Activated T-helper 1 cell treated with anti-CD3 and anti-CD28 coated beads, Interleukin-12 subunit alpha, Interleukin-12 subunit beta, Interleukin-2, Interleukin-4 antibody, amounts not matched to agents 30 ng/mL and 10 ng/mL and 1 ng/mL, durations not matched to agents 14 hours and 24 hours and 36 hours (primary cell): ENCODE measurements at regions of chr12 and their contacts with region 1.

Region 1: GRCh38 chr12:14239350-14239934 is 126.0 kb upstream of the ATF7IP start:
- DNase-seq: no peak
- H3K4me3 Mint-ChIP-seq: peak overlapping the region; percentile 74
- H3K27ac Mint-ChIP-seq: peak overlapping the region; percentile 73
- H3K4me1 Mint-ChIP-seq: peaks cover 22% of the 10 kb centered on the region
- H3K27me3 Mint-ChIP-seq: no peaks in the 10 kb centered on the region

Region 2: DNA sequence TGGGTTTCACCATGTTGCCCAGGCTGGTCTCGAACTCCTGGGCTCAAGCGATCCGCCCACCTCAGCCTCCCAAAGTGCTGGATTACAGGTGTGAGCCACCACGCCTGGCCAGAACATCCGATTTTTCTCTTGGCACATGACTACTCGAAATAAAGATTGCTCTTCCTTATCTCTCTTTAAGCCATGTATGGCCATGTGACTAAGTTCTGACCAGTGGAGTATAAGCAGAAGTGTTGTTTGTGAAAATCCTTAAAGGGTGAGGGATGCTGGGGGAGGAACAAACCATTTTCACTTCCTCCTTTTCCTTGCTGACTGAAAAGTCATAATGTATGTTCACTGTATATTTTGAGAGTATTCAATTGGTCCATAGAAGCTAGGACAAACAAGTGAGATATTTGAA is 75.4 kb after region 1 on chr12:
- intact Hi-C with region 1: no loop called
- DNase-seq: no peak
- H3K4me3 Mint-ChIP-seq: no peak overlapping the region
- H3K27ac Mint-ChIP-seq: no peak overlapping the region
- H3K4me1 Mint-ChIP-seq: no peaks in the 10 kb centered on the region
- H3K27me3 Mint-ChIP-seq: no peaks in the 10 kb centered on the region

Region 3: DNA sequence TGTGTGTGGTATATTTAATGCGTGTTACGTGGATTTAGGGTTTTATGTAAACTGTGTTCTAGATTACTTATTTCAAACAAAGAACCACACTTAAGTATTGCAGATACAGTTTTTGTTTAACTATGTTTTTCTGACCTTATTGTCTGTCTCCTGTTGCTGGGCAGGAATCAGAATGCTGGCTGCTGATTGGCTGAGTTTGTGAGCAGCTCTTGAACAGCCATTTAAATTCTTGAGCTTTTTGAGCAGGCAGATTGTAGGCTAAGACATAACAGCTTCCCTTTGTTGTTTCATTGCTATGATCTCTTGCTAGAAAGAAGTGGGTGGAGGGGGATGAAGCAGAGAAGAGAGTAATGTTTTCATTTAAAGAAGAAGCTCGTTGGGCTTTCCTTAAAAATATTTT is 178.3 kb after region 1 on chr12:
- intact Hi-C with region 1: loop called (anchors 1 kb)
- DNase-seq: peak; percentile 60
- H3K4me3 Mint-ChIP-seq: peak overlapping the region; percentile 75
- H3K27ac Mint-ChIP-seq: peak overlapping the region; percentile 88
- H3K4me1 Mint-ChIP-seq: peaks cover 56% of the 10 kb centered on the region
- H3K27me3 Mint-ChIP-seq: no peaks in the 10 kb centered on the region

Region 4: GRCh38 chr12:14454098-14454907 is 214.9 kb after region 1 on chr12:
- intact Hi-C with region 1: loop called (anchors 1 kb)
- DNase-seq: peak; percentile 34
- H3K4me3 Mint-ChIP-seq: peak overlapping the region; percentile 46
- H3K27ac Mint-ChIP-seq: peak overlapping the region; percentile 84
- H3K4me1 Mint-ChIP-seq: peaks cover 54% of the 10 kb centered on the region
- H3K27me3 Mint-ChIP-seq: no peaks in the 10 kb centered on the region

Region 5: GRCh38 chr12:14618983-14619382 is 379.5 kb after region 1 on chr12:
- intact Hi-C with region 1: loop called (anchors 1 kb)
- DNase-seq: no peak
- H3K4me3 Mint-ChIP-seq: no peak overlapping the region
- H3K27ac Mint-ChIP-seq: no peak overlapping the region
- H3K4me1 Mint-ChIP-seq: peaks cover 3% of the 10 kb centered on the region
- H3K27me3 Mint-ChIP-seq: peaks cover 2% of the 10 kb centered on the region

Region 6: DNA sequence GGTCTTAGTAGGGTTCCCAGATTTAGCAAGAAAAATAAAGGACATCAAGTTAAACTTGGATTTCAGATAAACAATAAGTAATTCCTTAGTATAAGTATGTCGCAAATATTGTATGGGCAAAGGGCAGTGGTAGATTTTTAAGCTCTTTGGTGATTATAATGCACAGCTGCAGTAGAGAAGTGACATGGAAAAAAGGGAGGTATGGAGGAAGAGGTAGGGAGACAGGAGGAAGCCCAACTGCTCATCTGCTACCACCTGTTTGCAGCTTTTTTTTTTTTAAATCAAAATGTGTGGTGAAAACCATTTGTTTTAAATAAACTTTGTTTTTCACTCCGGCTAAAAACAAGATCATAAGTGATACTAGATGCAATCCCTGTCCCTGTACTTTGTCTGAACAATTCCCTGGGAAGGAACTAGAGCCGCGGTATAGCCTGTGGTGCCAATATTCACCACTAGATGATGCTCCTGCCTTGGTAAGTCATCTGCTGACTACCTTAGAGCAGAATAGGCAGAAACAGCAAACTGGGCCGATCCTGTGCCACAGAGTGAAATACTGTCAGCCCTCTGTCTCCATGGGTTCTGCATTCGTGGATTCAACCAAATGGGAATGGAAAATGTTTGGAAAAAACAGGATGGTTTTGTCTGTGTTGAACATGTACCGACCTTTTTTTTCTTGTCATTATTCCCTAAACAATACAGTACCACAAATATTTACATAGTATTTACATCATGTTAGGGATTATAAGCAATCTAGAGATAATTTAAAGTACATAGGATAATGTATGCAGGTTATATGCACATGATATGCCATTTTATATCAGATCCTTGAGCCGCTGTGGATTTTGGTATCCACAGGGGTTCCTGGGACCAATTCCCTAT is 390.6 kb after region 1 on chr12:
- intact Hi-C with region 1: loop called (anchors 1 kb)
- DNase-seq: peak; percentile 42
- H3K4me3 Mint-ChIP-seq: no peak overlapping the region
- H3K27ac Mint-ChIP-seq: no peak overlapping the region
- H3K4me1 Mint-ChIP-seq: no peaks in the 10 kb centered on the region
- H3K27me3 Mint-ChIP-seq: peaks cover 10% of the 10 kb centered on the region

Region 7: GRCh38 chr12:14664510-14664909 is 425.1 kb after region 1 on chr12:
- intact Hi-C with region 1: loop called (anchors 1 kb)
- DNase-seq: no peak
- H3K4me3 Mint-ChIP-seq: no peak overlapping the region
- H3K27ac Mint-ChIP-seq: no peak overlapping the region
- H3K4me1 Mint-ChIP-seq: peaks cover 5% of the 10 kb centered on the region
- H3K27me3 Mint-ChIP-seq: peaks cover 7% of the 10 kb centered on the region

Region 8: GRCh38 chr12:14716848-14717444 is 477.5 kb after region 1 on chr12:
- intact Hi-C with region 1: loop called (anchors 1 kb)
- DNase-seq: peak; percentile 34
- H3K4me3 Mint-ChIP-seq: no peak overlapping the region
- H3K27ac Mint-ChIP-seq: no peak overlapping the region
- H3K4me1 Mint-ChIP-seq: no peaks in the 10 kb centered on the region
- H3K27me3 Mint-ChIP-seq: peaks cover 9% of the 10 kb centered on the region

Region 9: DNA sequence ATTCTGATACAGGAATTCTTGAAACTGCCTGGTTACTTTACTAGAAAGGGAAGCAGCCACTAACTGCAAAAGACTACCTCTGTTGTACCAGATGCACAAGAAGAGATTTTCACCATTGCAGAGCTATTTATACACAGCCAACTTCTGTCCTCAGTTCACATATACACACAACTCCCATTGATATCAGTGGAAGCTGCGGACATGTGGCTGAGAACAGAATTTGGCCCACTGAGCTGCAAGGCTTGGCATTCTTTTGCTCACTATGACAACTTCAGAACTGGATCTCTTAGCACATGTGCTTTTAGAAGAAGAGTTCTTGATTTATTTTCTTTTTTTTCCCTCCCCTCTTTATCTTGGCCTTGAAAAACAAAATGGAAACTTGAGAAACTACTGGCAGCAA is 1111.2 kb after region 1 on chr12:
- intact Hi-C with region 1: no loop called
- DNase-seq: no peak
- H3K4me3 Mint-ChIP-seq: no peak overlapping the region
- H3K27ac Mint-ChIP-seq: no peak overlapping the region
- H3K4me1 Mint-ChIP-seq: no peaks in the 10 kb centered on the region
- H3K27me3 Mint-ChIP-seq: peaks cover 4% of the 10 kb centered on the region